ENCODE measurements at regions of chr17 and their contacts with region 1.

Region 1: GRCh38 chr17:75478508-75478907 is 22.1 kb downstream of the TMEM94 start:
- DNase-seq: no peak
- ATAC-seq: no peak
- H3K4me3 ChIP-seq: no peak overlapping the region
- H3K27ac ChIP-seq: no peak overlapping the region
- H3K4me1 ChIP-seq: no peaks in the 10 kb centered on the region
- H3K27me3 ChIP-seq: no peaks in the 10 kb centered on the region
- CTCF ChIP-seq: no peak

Region 2: DNA sequence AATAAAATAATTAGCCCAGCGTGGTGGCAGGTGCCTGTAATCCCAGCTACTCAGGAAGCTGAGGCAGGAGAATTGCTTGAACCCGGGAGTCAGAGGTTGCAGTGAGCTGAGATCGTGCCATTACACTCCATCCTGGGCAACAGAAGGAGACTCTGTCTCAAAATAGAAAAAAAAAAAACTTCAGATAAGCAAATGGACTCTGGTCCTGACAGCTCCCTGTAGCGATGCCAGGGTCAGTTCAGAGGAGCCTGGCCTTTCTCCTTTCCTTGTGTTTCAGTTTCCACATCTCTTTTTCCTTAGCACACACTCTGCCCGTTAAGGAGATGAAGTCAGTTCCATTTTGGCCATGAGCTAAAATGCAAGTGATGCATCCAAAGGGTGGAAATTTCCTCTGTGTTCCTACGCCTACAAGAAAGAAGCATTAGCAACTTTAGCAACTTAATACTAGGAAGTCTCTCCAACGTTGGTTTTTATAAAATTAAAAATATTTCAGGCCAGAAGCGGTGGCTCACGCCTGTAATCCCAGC is 61.4 kb before region 1 on chr17:
- CTCF ChIA-PET with region 1: no interaction called
- POLR2A ChIA-PET with region 1: no interaction called
- intact Hi-C with region 1: no loop called
- DNase-seq: no peak
- ATAC-seq: no peak
- H3K4me3 ChIP-seq: no peak overlapping the region
- H3K27ac ChIP-seq: no peak overlapping the region
- H3K4me1 ChIP-seq: 0 out of 2 replicates have a peak, but pooled peaks cover 3% of the 10 kb centered on the region
- H3K27me3 ChIP-seq: no peaks in the 10 kb centered on the region
- CTCF ChIP-seq: no peak

Region 3: GRCh38 chr17:75492531-75493168 is 14.1 kb after region 1 on chr17:
- CTCF ChIA-PET with region 1: interaction called, 5 read pairs
- POLR2A ChIA-PET with region 1: interaction called, 10 read pairs
- intact Hi-C with region 1: no loop called
- DNase-seq: no peak
- ATAC-seq: no peak
- H3K4me3 ChIP-seq: no peak overlapping the region
- H3K27ac ChIP-seq: no peak overlapping the region
- H3K4me1 ChIP-seq: no peaks in the 10 kb centered on the region
- H3K27me3 ChIP-seq: no peaks in the 10 kb centered on the region
- CTCF ChIP-seq: no peak

Region 4: GRCh38 chr17:75504347-75504964 is 25.9 kb after region 1 on chr17:
- CTCF ChIA-PET with region 1: no interaction called
- POLR2A ChIA-PET with region 1: no interaction called
- intact Hi-C with region 1: no loop called
- DNase-seq: peak; percentile 65
- ATAC-seq: peak; percentile 67
- H3K4me3 ChIP-seq: no peak overlapping the region
- H3K27ac ChIP-seq: no peak overlapping the region
- H3K4me1 ChIP-seq: no peaks in the 10 kb centered on the region
- H3K27me3 ChIP-seq: no peaks in the 10 kb centered on the region
- CTCF ChIP-seq: peak; percentile 85